ENCODE measurements at regions of chr12 and their contacts with region 1.

Region 1: GRCh38 chr12:27034607-27035293 is 12.4 kb downstream of the MED21 start:
- DNase-seq: no peak
- H3K4me3 ChIP-seq: no peak overlapping the region
- H3K27ac ChIP-seq: no peak overlapping the region
- H3K4me1 ChIP-seq: no peaks in the 10 kb centered on the region
- H3K27me3 ChIP-seq: no peaks in the 10 kb centered on the region
- CTCF ChIP-seq: no peak

Region 2: GRCh38 chr12:27305673-27306456 is 271.1 kb after region 1 on chr12:
- intact Hi-C with region 1: loop called (anchors 5 kb)
- DNase-seq: no peak
- H3K4me3 ChIP-seq: no peak overlapping the region
- H3K27ac ChIP-seq: no peak overlapping the region
- H3K4me1 ChIP-seq: no peaks in the 10 kb centered on the region
- H3K27me3 ChIP-seq: no peaks in the 10 kb centered on the region
- CTCF ChIP-seq: peak; percentile 58